Vagina (tissue), 2 donors: ENCODE measurements at regions of chr14 and their contacts with region 1.

Region 1: GRCh38 chr14:99518441-99519346 is 37.5 kb downstream of the CCNK start:
- DNase-seq: no peak
- H3K4me3 ChIP-seq: no peak overlapping the region
- H3K27ac ChIP-seq: no peak overlapping the region
- H3K4me1 ChIP-seq: peaks cover 25% of the 10 kb centered on the region
- H3K27me3 ChIP-seq: no peaks in the 10 kb centered on the region
- CTCF ChIP-seq: peak; percentile 89 to 94 (median 89)
- POLR2A ChIP-seq: no peak

Region 2: DNA sequence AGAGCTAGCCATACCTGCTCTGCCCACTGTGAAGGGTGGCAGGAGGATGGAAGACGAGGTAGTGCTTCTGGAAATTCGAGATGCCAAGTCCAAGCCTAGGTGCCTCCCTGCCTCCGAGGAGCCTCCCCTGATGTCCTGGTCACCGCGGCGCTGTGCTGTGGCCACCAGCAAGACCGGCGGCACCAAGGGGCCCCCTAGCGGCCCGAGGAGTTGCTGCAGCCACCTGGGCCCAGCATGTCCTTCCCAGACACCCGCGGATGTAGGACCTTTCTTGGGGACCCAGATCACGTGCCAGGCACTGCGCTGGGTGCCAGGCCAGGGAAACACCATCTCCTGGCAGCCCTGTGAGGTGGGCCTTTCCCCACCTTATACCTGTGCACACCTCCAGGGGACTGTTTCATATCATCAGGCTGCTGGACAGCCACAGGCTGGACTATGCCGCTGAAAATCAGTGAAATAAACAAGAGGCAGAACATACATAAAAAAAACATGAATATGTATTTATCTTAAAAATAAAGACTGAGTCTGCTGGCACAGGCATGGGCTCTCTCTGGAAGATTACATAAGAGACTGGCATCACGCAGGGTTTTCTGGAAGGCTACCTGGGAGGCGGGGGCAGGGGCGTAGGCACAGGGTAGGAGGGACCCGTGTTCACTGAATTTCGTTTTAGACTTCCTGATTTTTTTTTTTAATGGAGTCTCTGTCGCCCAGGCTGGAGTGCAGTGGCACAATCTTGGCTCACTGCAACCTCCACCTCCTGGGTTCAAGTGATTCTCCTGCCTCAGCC is 110.3 kb after region 1 on chr14:
- intact Hi-C with region 1: loop called (anchors 2 kb)
- DNase-seq: no peak
- H3K4me3 ChIP-seq: no peak overlapping the region
- H3K27ac ChIP-seq: no peak overlapping the region
- H3K4me1 ChIP-seq: peaks cover 8% of the 10 kb centered on the region
- H3K27me3 ChIP-seq: no peaks in the 10 kb centered on the region
- CTCF ChIP-seq: peak; percentile 92 to 99 (median 95)
- POLR2A ChIP-seq: no peak